Caco-2 (cell line): ENCODE measurements at regions of chr7 and their contacts with region 1.

Region 1: DNA sequence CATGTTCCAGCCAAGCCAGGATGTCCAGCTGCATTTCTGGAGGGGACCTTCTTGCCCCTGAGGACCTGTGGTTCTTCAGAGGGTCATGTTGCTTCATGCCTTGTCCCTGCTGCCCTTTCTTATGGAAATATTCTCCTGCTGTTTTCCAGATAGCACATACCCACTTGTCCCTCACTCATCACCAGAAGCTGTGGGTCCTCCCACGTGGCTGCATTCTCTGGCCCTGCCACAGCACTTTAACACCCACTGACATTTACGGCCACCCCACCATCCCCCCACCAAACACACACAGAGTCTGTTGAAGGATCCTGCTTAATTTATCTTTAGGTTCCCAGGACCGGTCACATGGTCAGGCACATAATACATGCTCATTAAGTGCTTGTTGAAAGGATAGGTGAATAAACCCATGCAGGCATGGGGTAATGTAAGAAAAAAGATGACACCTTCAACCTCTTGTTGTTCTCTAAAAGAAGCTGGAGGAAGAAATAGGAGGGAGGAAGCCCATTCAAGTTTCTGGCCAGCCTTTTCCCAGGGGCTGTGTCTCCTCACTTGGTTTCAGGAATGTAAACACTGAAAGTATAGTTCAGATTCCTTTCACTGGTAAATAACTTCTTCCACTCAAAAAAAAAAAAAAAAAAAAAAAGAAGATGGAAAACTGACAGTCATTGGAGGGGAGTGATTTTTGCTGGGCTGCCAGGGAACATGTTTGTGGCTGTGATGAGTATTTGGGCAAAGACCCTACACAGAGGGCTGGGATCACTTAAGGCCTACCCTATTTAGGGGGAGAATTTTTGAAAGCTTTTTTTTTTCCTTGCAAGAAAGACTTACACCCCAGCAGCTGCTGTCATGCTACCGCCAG is 19.8 kb upstream of the BMPER start:
- DNase-seq: no peak
- H3K4me3 ChIP-seq: no peak overlapping the region
- H3K4me3 Mint-ChIP-seq: no peak overlapping the region
- H3K27ac Mint-ChIP-seq: no peak overlapping the region
- H3K4me1 ChIP-seq: peaks cover 8% of the 10 kb centered on the region; the same call in 1 of the 2 replicates
- H3K4me1 Mint-ChIP-seq: peaks cover 16% of the 10 kb centered on the region
- H3K27me3 ChIP-seq: no peaks in the 10 kb centered on the region
- H3K27me3 Mint-ChIP-seq: peaks cover 4% of the 10 kb centered on the region
- CTCF ChIP-seq: no peak

Region 2: DNA sequence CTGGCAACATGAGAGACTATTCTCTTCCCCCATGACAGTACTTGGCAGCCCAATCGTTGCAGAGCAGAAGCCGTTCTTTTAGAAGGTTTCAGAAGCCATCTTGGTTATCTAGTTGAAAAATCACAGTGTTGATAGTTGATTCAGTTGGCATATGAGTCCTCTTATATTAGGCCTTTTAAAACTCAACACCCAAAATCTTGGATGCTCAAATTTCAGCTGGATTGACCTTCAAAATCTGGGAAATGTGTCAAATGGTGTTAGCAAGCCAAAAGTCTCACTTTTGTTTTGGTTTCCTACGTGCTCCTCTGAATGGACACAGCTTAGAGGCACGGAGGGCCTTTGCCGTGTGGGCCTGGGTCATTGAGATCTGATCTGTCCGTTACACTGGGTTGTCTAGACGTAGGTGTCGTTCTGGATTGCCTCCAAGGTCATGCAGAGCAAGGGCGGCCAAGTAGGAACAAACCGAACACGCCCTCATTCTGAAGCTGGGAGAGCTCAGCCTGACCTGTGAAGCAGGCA is 39.5 kb before region 1 on chr7:
- CTCF ChIA-PET with region 1: no interaction called
- POLR2A ChIA-PET with region 1: no interaction called
- intact Hi-C with region 1: loop called (anchors 2 kb)
- DNase-seq: no peak
- H3K4me3 ChIP-seq: no peak overlapping the region
- H3K4me3 Mint-ChIP-seq: no peak overlapping the region
- H3K27ac Mint-ChIP-seq: no peak overlapping the region
- H3K4me1 ChIP-seq: no peaks in the 10 kb centered on the region
- H3K4me1 Mint-ChIP-seq: no peaks in the 10 kb centered on the region
- H3K27me3 ChIP-seq: no peaks in the 10 kb centered on the region
- H3K27me3 Mint-ChIP-seq: peaks cover 10% of the 10 kb centered on the region
- CTCF ChIP-seq: no peak